GM13976 (cell line): ENCODE measurements at regions of chr11 and their contacts with region 1.

Region 1: GRCh38 chr11:130213143-130213978 is 53.8 kb downstream of the ST14 start:
- DNase-seq: peak; percentile 89
- CTCF ChIP-seq: peak; percentile 93

Region 2: DNA sequence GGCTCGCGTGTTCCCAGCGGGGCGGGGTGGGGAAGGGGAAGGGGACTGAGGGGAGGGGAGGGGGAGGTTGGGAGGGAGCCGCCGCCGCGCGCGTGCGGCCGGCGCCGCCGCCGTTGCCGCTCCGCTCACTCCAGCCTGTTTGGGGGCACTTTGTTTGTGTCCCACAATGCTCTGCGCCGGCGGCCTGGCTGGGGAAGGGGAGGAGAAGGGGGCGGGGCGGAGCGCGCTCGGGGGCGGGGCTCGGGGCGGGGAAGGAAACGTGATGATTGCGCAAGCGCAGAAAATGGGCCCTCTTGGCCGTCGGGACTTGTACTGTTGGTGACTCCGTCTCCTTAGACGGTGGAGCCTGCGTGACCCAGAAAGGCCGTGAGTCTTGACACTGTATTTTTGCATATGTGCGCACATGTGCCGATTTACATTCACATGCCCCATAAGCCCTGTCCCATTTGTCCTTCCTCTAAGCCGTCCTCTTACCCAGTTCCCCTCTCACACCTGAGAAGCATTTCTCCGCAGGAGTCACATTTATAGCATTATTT is 101.5 kb after region 1 on chr11 and contains the start of gene ZBTB44:
- in situ Hi-C with region 1: no loop called
- DNase-seq: peak; percentile 95
- CTCF ChIP-seq: no peak

Region 3: DNA sequence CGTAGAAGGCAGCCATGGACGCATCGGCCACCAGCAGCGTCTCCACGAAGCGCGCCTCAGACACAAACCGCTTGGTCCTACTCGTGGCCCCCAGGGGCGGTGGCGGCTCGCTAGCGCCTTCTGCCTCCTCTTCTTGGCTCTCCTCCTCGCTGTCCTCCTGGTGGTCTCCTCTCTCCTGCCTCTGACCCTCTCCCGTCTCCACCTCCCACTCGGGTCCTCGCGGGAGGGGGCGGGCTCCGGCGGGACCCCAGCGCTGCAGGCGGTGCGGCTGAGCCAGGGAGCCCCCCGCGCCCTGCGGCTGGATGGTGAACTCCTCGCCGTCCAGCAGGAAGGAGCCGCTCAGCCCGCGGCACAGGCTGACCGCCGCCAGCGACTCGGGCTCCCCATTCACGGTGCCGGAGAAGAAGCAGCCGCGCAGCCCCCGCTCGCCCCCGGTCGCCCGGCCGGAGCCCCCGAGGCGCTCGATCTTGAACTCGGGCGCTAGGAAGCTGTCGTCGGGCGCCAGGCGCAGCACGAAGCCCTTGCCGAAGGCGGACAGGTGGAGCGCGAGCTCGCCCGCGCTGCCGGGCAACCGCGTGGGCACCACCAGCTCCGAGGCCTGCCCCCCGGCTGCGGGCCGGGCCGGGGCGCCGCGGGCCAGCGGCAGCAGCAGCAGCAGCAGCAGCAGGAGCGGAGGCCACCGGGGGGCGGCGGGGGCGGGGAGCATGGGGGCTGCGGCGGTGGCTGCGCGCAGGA is 214.4 kb after region 1 on chr11:
- in situ Hi-C with region 1: loop called (anchors 10 kb)
- DNase-seq: no peak
- CTCF ChIP-seq: no peak

Region 4: DNA sequence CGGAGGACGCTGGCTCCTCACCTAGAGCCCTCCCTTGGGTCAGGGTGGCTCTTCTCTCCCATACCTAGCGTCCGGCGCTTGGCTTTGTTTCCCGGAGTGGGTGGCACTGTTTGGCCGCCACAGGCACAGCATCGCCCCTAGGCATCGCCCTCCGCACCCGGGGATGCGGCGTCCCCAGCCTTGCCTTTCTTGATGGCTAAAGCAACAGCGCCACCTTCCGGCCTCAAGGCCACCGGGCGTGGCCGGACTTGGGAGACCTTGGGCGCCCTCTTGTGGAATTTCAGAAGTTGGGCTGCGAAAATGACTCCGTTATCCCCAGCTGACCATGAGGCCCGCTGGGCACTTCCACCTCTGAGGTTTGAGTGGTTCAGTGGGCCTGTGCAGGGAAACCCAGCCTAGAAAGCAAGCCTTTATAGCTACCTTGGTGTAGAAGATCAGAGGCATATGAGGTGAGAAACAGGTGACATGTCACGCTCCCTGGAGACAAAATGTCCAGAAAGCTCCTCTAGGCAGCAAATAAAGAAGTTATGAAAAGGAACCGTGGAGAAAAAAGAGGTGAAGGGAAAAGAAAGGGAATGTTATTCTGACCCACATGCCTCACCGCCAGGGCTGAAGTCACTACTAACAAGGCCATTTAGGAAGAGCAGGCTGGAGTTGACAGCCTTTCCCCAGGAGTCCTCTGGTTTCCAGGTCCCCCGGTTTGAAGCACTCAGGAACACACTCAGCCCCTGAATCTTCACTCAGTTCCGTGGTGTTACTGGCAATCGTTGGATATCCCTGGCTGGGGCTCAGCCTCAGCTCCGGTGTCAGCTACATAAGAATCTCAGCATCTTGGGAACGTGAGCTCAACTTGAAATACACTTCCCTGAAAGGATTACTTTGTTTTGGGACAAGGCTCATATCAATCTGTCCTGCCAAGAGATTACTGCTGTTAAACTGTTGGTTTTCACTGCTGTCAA is 648.8 kb after region 1 on chr11:
- in situ Hi-C with region 1: loop called (anchors 25 kb)
- DNase-seq: peak; percentile 85
- CTCF ChIP-seq: peak; percentile 100